GM18951 (cell line): ENCODE measurements at regions of chr2 and their contacts with region 1.

Region 1: GRCh38 chr2:234500394-234501006 is 3.6 kb upstream of the ARL4C start:
- POLR2A ChIP-seq: no peak

Region 2: GRCh38 chr2:234135720-234136221 is 364.7 kb before region 1 on chr2:
- in situ Hi-C with region 1: loop called (anchors 10 kb)
- POLR2A ChIP-seq: no peak

Region 3: DNA sequence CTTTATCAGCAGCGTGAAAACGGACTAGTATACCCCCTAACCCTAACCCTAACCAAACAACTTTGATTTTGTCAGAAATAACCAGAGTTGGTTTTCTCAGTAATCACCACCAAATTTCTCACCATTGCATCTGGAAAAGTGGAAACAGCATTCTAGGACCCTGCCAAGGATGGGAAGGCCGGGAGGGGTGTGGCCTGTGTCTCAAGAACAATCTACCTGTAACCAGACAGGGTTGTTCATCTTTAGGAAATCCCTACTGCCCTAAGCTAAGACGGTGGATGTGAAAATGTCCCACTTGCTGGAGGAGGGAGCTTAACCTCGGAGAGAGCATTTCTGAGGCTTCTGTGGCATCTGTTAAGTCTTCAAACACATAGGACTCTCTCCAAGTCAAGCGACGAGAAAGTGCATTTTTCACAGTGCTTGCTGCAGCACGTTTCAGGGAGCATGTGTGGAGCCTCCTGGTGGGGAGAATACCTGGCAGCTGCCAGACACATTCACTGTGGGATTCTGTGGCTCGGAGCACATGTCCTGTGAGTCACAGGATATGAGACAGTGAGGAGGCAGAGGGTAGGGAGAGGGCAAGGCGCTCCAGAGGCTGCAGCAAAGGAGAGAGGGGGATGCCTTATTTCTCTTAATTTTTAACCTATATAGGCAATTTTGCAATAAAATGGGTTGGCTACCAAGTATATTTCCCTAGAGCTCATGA is 242.5 kb before region 1 on chr2:
- in situ Hi-C with region 1: no loop called
- POLR2A ChIP-seq: no peak

Region 4: GRCh38 chr2:234288974-234289455 is 211.5 kb before region 1 on chr2:
- in situ Hi-C with region 1: loop called (anchors 10 kb)
- POLR2A ChIP-seq: no peak